ENCODE measurements at regions of chr3 and their contacts with region 1.

Region 1: GRCh38 chr3:46866720-46867549 is 3.7 kb upstream of the MYL3 start:
- DNase-seq: peak; percentile 67 to 90 (median 80)
- ATAC-seq: peak; percentile 84
- H3K4me3 ChIP-seq: no peak overlapping the region
- H3K4me3 Mint-ChIP-seq: no peak overlapping the region
- H3K27ac ChIP-seq: no peak overlapping the region
- H3K27ac Mint-ChIP-seq: no peak overlapping the region
- H3K4me1 ChIP-seq: peaks cover 5% of the 10 kb centered on the region
- H3K4me1 Mint-ChIP-seq: no peaks in the 10 kb centered on the region
- H3K27me3 ChIP-seq: no peaks in the 10 kb centered on the region
- H3K27me3 Mint-ChIP-seq: peaks cover 5% of the 10 kb centered on the region
- CTCF ChIP-seq: peak; percentile 80

Region 2: GRCh38 chr3:46049116-46049515 is 817.8 kb before region 1 on chr3:
- CTCF ChIA-PET with region 1: no interaction called
- POLR2A ChIA-PET with region 1: no interaction called
- intact Hi-C with region 1: no loop called
- DNase-seq: peak in 1 of 14 experiments; percentile 19
- ATAC-seq: no peak
- H3K4me3 ChIP-seq: no peak overlapping the region
- H3K4me3 Mint-ChIP-seq: no peak overlapping the region
- H3K27ac ChIP-seq: no peak overlapping the region
- H3K27ac Mint-ChIP-seq: no peak overlapping the region
- H3K4me1 ChIP-seq: peaks cover 10% of the 10 kb centered on the region
- H3K4me1 Mint-ChIP-seq: peaks cover 46% of the 10 kb centered on the region
- H3K27me3 ChIP-seq: no peaks in the 10 kb centered on the region
- H3K27me3 Mint-ChIP-seq: no peaks in the 10 kb centered on the region
- CTCF ChIP-seq: no peak

Region 3: DNA sequence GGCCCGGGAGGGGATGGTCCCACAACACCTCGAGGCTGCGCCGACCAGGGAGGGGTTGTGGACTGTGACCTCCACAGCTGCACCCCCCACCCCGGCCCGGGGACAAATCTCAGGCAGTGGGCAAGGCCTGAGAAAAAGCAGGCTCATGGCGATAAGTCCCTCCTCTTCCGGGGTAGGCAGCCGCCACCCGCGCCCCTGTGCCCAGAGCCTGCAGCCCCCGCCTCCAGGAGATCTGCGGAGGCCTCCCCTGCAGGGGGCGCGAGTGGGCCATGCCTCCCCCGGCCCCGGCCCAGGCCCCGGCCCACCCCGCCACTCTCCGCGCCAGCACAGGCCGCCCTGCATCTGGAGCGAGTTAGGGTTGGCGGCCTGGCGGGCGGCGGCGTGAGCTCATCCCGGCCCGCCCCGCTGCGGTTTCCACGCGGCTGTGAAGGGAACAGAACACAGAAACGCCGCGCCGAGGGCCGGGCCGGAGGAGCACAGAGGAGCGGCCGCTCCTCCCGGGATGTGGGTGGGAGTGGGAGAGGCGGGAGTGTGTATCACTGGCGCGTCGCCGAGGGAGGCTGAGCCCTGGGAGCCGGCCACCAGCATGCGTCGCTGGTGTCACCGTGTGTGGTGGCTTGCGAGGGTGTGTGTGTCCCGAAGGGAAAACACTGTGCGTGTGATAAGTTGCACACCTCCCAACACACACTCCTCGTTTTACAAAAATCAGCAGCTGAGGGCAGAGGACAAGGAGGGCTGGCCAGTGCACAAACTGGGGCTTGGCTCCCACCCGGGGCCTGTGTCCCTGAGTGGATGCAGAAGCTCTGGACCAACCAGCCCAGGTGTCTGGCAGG is 20.9 kb before region 1 on chr3:
- CTCF ChIA-PET with region 1: no interaction called
- POLR2A ChIA-PET with region 1: no interaction called
- intact Hi-C with region 1: no loop called
- DNase-seq: peak; percentile 60 to 88 (median 74)
- ATAC-seq: peak; percentile 93
- H3K4me3 ChIP-seq: peak overlapping the region; percentile 70
- H3K4me3 Mint-ChIP-seq: peak overlapping the region; percentile 74
- H3K27ac ChIP-seq: no peak overlapping the region
- H3K27ac Mint-ChIP-seq: no peak overlapping the region
- H3K4me1 ChIP-seq: peaks cover 21% of the 10 kb centered on the region
- H3K4me1 Mint-ChIP-seq: peaks cover 8% of the 10 kb centered on the region
- H3K27me3 ChIP-seq: no peaks in the 10 kb centered on the region
- H3K27me3 Mint-ChIP-seq: no peaks in the 10 kb centered on the region
- CTCF ChIP-seq: peak; percentile 74

Region 4: DNA sequence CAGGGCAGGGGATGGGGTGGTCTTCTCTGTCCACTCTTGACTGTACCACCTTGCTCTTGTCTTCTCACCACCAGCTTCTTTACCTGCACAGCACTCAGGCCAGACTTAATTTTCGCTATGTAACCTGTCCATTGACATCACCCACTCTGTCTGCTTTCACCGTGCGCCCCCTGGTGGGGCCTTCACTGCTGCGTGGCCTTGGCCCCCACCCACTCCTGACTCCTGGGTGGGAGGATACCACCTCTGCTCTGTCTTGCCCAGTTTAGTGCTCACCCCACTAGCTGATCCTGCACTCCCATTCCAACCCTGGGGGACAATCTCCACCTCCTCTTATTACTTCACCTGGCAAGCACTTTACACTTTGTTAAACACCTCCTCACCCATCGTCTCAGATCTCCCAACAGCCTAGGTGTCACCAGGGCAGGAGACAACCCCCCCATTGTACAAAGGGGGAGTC is 28.3 kb after region 1 on chr3:
- CTCF ChIA-PET with region 1: no interaction called
- POLR2A ChIA-PET with region 1: no interaction called
- intact Hi-C with region 1: loop called in 1 of 2 experiments (anchors 1 kb)
- DNase-seq: peak; percentile 69 to 87 (median 76)
- ATAC-seq: peak; percentile 92
- H3K4me3 ChIP-seq: no peak overlapping the region
- H3K4me3 Mint-ChIP-seq: no peak overlapping the region
- H3K27ac ChIP-seq: no peak overlapping the region
- H3K27ac Mint-ChIP-seq: no peak overlapping the region
- H3K4me1 ChIP-seq: peaks cover 18% of the 10 kb centered on the region
- H3K4me1 Mint-ChIP-seq: no peaks in the 10 kb centered on the region
- H3K27me3 ChIP-seq: peaks cover 42 to 43% of the 10 kb centered on the region in 2 experiments
- H3K27me3 Mint-ChIP-seq: peaks cover 81% of the 10 kb centered on the region
- CTCF ChIP-seq: peak; percentile 82

Region 5: DNA sequence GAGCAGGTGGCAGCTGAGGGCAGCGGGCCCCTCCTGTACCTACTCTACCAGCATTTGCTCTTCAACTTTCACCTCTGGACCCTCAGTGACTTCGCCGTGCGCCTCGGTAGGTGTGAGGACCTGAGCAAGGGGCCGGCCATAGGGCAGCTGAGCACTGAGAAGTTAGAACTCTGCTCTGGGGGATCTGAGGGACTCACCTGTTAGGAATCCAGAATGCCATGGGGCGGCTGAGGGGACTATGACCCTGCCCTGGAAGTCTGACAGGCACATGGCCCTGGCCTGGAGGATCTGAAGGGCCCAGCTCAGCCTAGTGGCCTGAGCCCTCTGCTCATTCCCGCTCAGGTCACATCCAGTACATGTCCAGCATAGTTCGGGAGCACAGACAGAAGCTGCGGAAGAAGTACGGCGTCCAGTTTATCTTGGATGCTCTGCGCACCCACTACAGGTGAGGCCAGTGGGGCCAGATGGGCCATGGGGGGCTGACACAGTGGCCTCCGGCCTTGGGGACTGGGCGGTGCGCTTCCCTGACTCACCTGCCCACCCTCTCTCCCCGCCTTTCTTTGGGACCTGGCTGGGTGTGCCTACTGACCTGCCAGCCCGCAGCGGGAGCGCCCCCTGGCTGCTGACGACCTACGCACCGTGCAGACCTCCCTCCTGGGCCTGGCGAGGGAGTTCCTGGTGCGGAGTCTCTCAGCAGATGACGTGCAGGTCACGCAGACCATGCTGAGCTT is 131.4 kb after region 1 on chr3:
- CTCF ChIA-PET with region 1: no interaction called
- POLR2A ChIA-PET with region 1: no interaction called
- intact Hi-C with region 1: loop called (anchors 2 to 5 kb)
- DNase-seq: peak; percentile 59 to 88 (median 74)
- ATAC-seq: peak; percentile 79
- H3K4me3 ChIP-seq: no peak overlapping the region
- H3K4me3 Mint-ChIP-seq: no peak overlapping the region
- H3K27ac ChIP-seq: no peak overlapping the region
- H3K27ac Mint-ChIP-seq: peak overlapping the region; percentile 25
- H3K4me1 ChIP-seq: peaks cover 35% of the 10 kb centered on the region
- H3K4me1 Mint-ChIP-seq: peaks cover 16% of the 10 kb centered on the region
- H3K27me3 ChIP-seq: no peaks in the 10 kb centered on the region
- H3K27me3 Mint-ChIP-seq: no peaks in the 10 kb centered on the region
- CTCF ChIP-seq: peak; percentile 86

Region 6: GRCh38 chr3:47370887-47371697 is 504.2 kb after region 1 on chr3:
- CTCF ChIA-PET with region 1: no interaction called
- POLR2A ChIA-PET with region 1: no interaction called
- intact Hi-C with region 1: loop called in 1 of 2 experiments (anchors 2 kb)
- DNase-seq: peak in 12 of 14 experiments; percentile 7 to 60 (median 22)
- ATAC-seq: no peak
- H3K4me3 ChIP-seq: no peak overlapping the region
- H3K4me3 Mint-ChIP-seq: no peak overlapping the region
- H3K27ac ChIP-seq: no peak overlapping the region
- H3K27ac Mint-ChIP-seq: no peak overlapping the region
- H3K4me1 ChIP-seq: peaks cover 5% of the 10 kb centered on the region
- H3K4me1 Mint-ChIP-seq: no peaks in the 10 kb centered on the region
- H3K27me3 ChIP-seq: no peaks in the 10 kb centered on the region
- H3K27me3 Mint-ChIP-seq: no peaks in the 10 kb centered on the region
- CTCF ChIP-seq: peak; percentile 26